ENCODE measurements at regions of chr16 and their contacts with region 1.

Region 1: DNA sequence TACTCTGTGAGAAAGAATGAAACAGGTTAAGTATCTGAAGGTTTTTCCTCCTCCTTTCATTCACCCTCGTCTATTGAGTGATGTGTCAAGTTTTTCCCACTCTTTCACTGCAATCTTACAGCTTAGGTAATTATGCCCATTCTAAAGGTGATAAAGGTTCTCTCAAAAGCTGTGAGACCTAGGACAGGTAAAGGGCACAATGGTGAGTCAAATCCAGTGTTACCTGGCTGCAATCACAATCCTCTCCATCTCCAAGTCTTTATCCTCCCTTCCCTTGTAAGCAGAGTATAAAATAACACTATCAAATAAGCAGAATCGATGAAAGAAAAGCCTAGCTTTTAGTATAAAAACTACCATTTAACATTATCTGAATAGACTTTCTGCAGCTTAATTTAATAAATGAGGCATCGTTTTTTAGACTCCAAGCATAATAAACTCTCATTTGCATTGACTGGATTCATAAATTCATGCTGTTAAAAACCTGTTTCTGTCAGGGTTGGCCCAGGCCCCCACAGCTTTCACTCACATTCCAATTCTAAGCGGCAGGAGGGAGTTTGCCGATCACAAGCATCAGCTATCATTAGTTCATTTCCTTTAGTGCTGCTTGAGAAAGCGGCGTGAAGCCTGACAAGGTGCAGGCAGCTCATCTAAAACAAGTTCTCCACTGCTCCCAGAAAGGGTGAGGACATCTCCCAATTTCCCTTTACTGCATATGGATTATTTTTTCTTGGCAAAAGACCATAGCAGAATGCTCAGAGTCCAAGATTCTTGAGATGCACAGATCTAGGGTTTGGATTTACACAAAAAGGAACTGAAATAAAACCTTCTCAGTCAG is 67.8 kb downstream of the CDH8 start:
- DNase-seq: no peak
- H3K4me3 ChIP-seq: no peak overlapping the region
- H3K27ac ChIP-seq: no peak overlapping the region
- H3K4me1 ChIP-seq: no peaks in the 10 kb centered on the region
- CTCF ChIP-seq: no peak

Region 2: GRCh38 chr16:61993076-61993475 is 24.6 kb after region 1 on chr16:
- CTCF ChIA-PET with region 1: no interaction called
- POLR2A ChIA-PET with region 1: interaction called, 10 read pairs
- intact Hi-C with region 1: no loop called
- DNase-seq: no peak
- H3K4me3 ChIP-seq: no peak overlapping the region
- H3K27ac ChIP-seq: no peak overlapping the region
- H3K4me1 ChIP-seq: no peaks in the 10 kb centered on the region
- CTCF ChIP-seq: no peak